ENCODE measurements at regions of chr15 and their contacts with region 1.

Region 1: GRCh38 chr15:101100593-101101442 is 151.0 kb downstream of the CHSY1 start:
- DNase-seq: no peak
- H3K4me3 ChIP-seq: no peak overlapping the region
- H3K27ac ChIP-seq: no peak overlapping the region
- H3K4me1 ChIP-seq: peaks cover 0 to 2% (median 0%) of the 10 kb centered on the region in 4 experiments
- H3K27me3 ChIP-seq: no peaks in the 10 kb centered on the region

Region 2: DNA sequence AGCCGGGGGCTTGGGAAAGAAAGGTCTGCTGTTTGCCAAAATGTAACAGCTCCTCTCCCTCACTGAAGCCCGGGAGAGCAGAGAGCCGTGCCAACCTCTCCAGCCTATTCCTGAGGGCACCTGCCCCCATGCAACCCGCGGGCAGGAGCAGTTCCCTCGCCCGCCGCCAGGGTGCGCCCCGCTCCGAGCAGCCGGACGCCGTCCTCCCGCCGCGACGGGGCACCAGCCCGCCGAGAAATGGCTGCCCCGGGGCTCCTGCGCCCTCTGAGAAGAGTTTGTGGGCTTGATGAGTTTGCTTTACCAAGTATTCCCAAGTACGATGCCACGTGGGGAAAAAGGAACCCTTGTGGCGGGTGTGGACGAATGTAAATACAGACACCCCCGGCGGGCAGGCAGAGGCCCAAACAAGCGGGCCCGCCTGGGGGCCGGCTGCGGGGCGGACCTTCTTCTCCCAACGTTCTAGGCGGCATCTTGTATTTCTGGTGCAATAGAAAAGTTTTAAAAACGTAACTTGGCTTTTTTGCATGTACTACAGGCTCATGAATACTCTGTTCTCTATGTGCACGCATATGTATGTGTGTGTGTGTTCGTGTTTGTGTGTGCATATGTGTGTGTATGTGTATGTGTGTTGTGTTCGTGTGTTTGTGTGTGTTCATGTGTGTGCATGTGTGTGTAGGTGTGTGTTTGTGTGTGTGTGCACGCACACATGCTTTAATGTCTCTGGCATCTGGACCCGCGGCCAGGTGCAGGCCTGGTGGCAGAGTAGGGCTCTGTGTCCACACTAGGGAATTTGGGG is 11.8 kb before region 1 on chr15:
- CTCF ChIA-PET with region 1: interaction called, 19 read pairs
- POLR2A ChIA-PET with region 1: no interaction called
- DNase-seq: peak; percentile 57 to 70 (median 67)
- H3K4me3 ChIP-seq: peak overlapping the region in 3 of 7 experiments; percentile 33 to 60 (median 42)
- H3K27ac ChIP-seq: no peak overlapping the region
- H3K4me1 ChIP-seq: peaks cover 5 to 38% (median 34%) of the 10 kb centered on the region in 4 experiments
- H3K27me3 ChIP-seq: no peaks in the 10 kb centered on the region

Region 3: GRCh38 chr15:101115786-101116680 is 15.2 kb after region 1 on chr15:
- CTCF ChIA-PET with region 1: interaction called, 14 read pairs
- POLR2A ChIA-PET with region 1: no interaction called
- DNase-seq: peak in 2 of 3 donors; percentile 58 to 67
- H3K4me3 ChIP-seq: peak overlapping the region in 2 of 7 experiments; percentile 20 to 45
- H3K27ac ChIP-seq: peak overlapping the region in 1 of 2 experiments; percentile 56
- H3K4me1 ChIP-seq: peaks cover 0 to 52% (median 38%) of the 10 kb centered on the region in 4 experiments
- H3K27me3 ChIP-seq: no peaks in the 10 kb centered on the region

Region 4: DNA sequence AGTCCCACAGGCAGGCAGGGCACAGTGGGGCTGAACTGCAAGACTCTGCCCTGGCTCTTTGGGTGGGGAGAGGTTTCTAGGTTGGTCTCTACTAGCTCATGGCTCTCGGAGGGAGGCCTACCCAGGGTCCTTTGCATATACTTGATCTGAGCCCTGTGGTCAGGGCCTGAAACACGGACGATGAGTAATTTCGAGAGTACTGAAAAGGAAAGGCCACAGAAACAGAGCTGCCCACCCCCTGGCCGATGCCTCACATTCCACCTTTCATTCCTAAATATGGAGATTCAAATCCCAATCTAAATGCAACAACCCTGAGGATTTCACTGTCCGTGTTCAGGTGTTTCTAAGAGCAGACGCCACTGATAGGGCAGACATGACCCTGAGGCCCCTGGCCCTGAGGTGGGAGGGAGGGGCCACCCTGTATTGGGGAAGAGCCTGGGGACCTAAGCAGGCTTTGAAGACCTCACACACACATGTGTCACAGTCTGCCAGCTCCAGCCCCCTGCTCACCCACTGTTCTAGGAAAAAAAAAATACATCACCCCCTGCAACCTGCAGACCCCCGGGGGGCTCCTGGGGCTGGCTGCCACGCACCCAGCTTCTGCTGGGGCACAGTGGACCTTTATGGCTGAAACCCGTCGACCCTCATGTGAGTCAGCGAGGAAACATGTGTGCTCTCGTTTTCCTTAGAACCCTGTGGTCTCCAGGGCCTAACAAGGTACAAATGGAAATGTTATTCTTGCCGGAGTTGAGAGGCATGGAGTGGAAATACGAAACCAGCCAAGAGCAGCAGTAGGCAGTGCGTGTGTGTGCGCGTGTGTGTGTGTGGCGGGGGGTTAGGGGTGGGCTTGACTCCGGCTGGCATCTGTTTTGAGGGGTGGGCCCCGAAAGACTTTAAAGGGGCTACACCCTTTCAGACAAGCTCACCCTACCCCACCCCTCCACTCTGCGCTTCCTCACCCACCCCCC is 38.4 kb after region 1 on chr15:
- CTCF ChIA-PET with region 1: interaction called, 22 read pairs
- POLR2A ChIA-PET with region 1: no interaction called
- DNase-seq: peak in 2 of 3 donors; percentile 53 to 62
- H3K4me3 ChIP-seq: no peak overlapping the region
- H3K27ac ChIP-seq: no peak overlapping the region
- H3K4me1 ChIP-seq: peaks cover 0 to 60% (median 47%) of the 10 kb centered on the region in 4 experiments
- H3K27me3 ChIP-seq: no peaks in the 10 kb centered on the region